Activated CD4-positive, alpha-beta T cell treated with anti-CD3 and anti-CD28 coated beads, Interleukin-2, amount 10 ng/mL, durations not matched to agents 24 days and 14 days (primary cell): ENCODE measurements at regions of chr19 and their contacts with region 1.

Region 1: GRCh38 chr19:55258828-55259539 is at the start of gene PPP6R1:
- DNase-seq: peak; percentile 98
- H3K4me3 Mint-ChIP-seq: peak within 1 kb of the TSS; percentile 96
- H3K27ac Mint-ChIP-seq: peak within 1 kb of the TSS; percentile 99
- H3K4me1 Mint-ChIP-seq: peaks cover 44% of the 10 kb centered on the region
- H3K27me3 Mint-ChIP-seq: peaks cover 2% of the 10 kb centered on the region
- total RNA-seq, gene PPP6R1: 196 and 216 TPM in 2 replicates

Region 2: DNA sequence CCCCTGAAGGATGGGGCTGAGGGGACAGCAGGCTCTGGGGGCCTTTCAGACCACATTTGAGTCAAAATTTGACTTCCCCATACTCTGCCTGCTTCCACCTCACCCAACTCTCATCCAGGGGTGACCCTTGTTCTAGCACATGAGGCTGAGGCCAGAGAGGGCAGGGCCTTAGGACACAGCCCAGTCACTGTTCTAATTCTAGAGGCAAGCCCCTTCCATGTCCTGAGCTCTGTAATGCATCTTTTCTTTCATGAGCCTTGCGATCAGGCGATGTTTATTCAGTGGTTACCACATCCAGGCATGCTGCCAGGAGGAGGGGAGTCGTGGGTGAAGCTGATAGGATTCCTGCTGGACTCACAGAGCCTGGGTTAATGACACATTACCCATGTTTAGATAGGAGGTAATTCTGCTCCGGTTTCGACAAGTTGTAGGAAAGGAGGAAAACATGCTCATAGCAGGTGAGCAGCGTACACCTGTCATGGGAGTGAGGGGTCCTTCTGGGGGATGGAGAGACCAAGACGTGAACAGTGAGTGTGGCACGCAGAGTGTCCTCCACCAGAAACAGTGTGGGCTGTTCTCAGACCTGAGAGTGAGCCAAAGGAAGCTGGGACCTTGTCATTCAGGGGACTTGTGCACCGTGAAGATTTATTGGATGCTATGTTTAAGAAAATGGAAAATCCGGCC is 1049.0 kb before region 1 on chr19:
- intact Hi-C with region 1: loop called (anchors 10 kb)
- DNase-seq: peak; percentile 62
- H3K4me3 Mint-ChIP-seq: peak overlapping the region; percentile 66
- H3K27ac Mint-ChIP-seq: peak overlapping the region; percentile 90
- H3K4me1 Mint-ChIP-seq: peaks cover 58% of the 10 kb centered on the region
- H3K27me3 Mint-ChIP-seq: no peaks in the 10 kb centered on the region

Region 3: GRCh38 chr19:55117636-55118391 is 141.2 kb before region 1 on chr19 and contains the start of gene PPP1R12C:
- intact Hi-C with region 1: loop called (anchors 2 kb)
- DNase-seq: peak; percentile 99
- H3K4me3 Mint-ChIP-seq: peak within 1 kb of the TSS; percentile 94
- H3K27ac Mint-ChIP-seq: peak within 1 kb of the TSS; percentile 91
- H3K4me1 Mint-ChIP-seq: peaks cover 28% of the 10 kb centered on the region
- H3K27me3 Mint-ChIP-seq: peaks cover 10% of the 10 kb centered on the region
- total RNA-seq, gene PPP1R12C: 103 and 104 TPM in 2 replicates

Region 4: DNA sequence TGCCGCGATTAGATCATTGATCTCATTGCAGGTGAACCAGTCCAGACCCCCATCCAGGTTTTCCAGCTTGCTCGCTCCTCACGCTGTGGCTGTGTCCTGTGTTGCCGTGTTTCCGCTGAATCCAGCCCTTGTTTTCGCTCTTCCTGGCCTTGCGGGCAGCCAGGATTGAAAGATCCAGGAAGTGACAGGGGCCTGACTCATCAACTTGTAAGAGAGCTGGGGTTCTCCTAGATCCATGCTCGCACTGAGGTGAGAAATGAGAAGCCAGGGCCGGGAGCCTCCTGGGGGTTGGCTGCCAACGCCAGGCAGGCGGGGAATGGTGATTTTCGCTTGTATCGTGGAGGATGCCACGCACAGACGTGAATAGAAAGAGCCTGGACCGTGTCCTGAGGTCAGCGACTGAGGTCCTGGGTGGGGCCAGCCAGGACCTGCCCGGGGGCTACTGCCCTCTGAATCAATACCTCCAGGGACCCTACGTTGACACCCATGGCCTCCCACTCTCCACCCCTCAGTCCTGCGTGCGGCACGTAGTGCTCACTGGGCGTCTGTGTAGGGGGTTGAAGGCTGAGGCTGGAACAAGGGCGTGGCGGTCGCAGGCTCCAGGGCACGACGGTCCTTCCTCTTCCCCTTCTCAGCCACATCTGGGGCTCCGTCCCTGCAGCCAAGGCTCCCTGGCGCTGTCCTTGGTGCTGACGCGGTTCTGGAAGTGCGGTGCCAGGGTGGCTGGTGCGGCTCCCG is 42.4 kb before region 1 on chr19:
- intact Hi-C with region 1: loop called (anchors 1 kb)
- DNase-seq: peak; percentile 89
- H3K4me3 Mint-ChIP-seq: peak overlapping the region; percentile 68
- H3K27ac Mint-ChIP-seq: peak overlapping the region; percentile 74
- H3K4me1 Mint-ChIP-seq: peaks cover 16% of the 10 kb centered on the region
- H3K27me3 Mint-ChIP-seq: peaks cover 15% of the 10 kb centered on the region

Region 5: DNA sequence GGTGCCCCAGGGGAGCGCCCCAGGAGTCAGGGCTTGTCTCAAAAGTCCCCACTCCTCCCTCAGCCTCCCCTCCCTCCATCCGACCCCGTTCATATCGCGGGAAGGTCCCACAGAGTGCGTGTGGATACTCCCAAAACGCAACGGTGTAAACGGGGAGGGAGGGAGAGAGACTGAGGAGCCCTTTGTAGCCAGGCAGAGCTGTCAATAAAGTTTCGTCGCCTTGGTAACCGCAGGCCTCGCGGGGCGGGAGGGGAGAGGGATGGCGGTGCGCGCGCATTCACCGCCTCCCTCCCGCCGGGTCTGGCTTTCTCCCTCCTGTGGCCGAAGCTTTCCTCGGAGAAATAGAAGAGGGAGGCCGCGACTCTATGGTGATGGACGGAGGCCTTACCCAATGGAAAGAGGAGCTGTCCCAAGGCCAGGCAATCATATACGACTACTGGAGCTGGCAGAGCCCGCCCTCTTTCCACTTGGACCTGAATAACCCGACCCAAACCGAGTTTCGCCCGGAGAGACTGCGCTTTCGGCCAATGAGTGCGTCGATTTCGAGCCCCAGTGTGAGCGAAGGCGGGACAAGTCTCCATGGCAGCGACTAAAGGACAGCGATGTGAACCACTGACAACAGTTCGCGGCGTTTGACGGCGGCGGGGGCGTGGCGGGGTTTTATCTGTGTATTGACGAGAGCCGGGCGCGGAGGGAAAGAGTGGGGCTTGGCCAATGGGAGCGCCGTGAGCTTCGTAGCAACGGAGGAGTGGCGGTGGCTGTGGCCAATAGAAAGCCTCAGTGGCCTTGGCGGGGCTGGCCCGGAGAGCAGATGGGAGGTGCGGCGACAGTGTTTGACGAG is 80.3 kb after region 1 on chr19 and contains the start of gene KMT5C:
- intact Hi-C with region 1: loop called (anchors 1 kb)
- DNase-seq: peak; percentile 100
- H3K4me3 Mint-ChIP-seq: peak within 1 kb of the TSS; percentile 91
- H3K27ac Mint-ChIP-seq: peak within 1 kb of the TSS; percentile 97
- H3K4me1 Mint-ChIP-seq: peaks cover 16% of the 10 kb centered on the region
- H3K27me3 Mint-ChIP-seq: peaks cover 11% of the 10 kb centered on the region
- total RNA-seq, gene KMT5C: 31.3 and 32.2 TPM in 2 replicates

Region 6: DNA sequence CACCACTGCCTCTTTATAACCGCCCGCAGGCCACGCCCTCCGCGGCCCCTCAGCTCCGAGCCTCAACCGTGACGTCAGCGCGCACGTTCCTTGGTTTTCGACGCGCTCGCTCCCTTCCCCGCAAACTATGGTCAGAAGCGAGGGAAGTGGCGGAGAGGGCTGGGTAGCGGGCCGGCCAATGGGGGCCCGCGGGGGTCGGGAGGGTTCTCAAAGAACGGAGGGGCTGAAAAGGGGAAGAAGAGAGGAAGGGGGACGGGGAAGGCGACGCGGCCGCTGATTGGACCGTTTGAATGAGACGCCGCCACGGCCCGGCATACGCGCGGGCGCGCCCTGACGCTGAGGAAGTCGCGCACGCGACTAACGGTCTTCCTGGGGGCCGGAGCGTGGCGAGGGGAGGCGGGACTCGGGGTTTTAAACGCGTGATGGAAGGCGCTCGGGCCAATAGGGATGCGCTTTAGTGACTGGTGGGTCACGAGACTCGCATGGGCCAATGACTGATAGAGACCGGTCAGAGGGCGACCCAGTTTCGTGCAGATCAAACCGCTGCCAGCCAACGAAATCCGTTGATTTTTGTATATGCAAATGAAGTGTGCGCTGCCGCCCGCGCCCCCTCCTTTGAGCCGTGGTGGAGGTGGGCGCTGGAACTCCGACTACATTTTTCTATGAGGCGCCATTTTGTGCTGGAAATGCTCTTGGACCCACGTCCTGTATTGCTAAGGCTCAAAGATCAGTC is 149.0 kb after region 1 on chr19:
- intact Hi-C with region 1: loop called (anchors 2 kb)
- DNase-seq: peak; percentile 99
- H3K4me3 Mint-ChIP-seq: peak overlapping the region; percentile 89
- H3K27ac Mint-ChIP-seq: peak overlapping the region; percentile 98
- H3K4me1 Mint-ChIP-seq: peaks cover 34% of the 10 kb centered on the region
- H3K27me3 Mint-ChIP-seq: peaks cover 7% of the 10 kb centered on the region

Region 7: DNA sequence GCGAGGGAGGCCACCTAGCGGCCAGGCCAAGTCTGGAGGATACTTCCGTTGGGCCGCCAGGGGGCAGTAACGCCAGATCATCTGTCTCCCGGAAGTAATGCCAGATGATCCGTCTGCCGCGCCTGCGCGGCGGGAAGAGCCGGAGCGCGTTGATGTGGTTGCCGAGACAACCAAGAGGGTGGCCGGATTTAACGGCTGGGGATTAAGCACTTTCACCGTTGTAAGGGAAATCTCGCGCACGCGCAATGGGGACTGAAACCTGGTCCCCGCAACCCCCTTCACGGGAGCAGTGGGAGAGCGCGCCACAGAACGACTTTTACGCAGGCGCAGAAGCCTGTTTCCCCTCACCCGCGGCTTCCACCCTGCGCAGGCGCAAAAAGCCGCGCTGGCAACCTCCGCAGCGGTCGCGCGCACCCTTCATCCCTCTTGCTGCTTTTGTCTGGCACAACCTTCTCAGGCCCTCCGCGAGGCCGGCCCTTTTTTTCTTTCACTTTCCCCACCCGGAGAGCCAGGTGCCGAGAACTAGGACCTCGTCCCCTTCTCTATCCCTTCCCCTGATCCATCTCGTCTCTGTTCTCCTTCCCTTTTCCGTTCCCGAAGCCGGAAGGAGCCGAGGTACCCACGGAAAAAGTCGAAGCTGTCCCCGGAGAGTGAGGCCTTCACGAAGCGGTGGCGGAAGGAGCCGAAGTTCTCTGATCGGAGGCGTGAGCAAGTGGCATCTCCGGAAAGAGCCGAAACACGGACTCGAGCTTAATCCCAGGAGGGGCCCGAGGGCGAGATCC is 395.0 kb after region 1 on chr19:
- intact Hi-C with region 1: loop called (anchors 10 kb)
- DNase-seq: peak; percentile 100
- H3K4me3 Mint-ChIP-seq: peak overlapping the region; percentile 88
- H3K27ac Mint-ChIP-seq: peak overlapping the region; percentile 99
- H3K4me1 Mint-ChIP-seq: peaks cover 42% of the 10 kb centered on the region
- H3K27me3 Mint-ChIP-seq: peaks cover 1% of the 10 kb centered on the region